HCT116 (cell line): ENCODE measurements at regions of chr10 and their contacts with region 1.

Region 1: GRCh38 chr10:60816628-60817397 is 38.5 kb downstream of the CDK1 start:
- DNase-seq: peak; percentile 64
- ATAC-seq: peak; percentile 92
- H3K4me3 ChIP-seq: no peak overlapping the region
- H3K27ac ChIP-seq: no peak overlapping the region
- H3K4me1 ChIP-seq: no peaks in the 10 kb centered on the region
- H3K27me3 ChIP-seq: no peaks in the 10 kb centered on the region
- CTCF ChIP-seq: peak; percentile 57 to 87 (median 72); a peak in 5 of 6 replicates
- POLR2A ChIP-seq: no peak
- RAD21 ChIP-seq: peak; percentile 87

Region 2: DNA sequence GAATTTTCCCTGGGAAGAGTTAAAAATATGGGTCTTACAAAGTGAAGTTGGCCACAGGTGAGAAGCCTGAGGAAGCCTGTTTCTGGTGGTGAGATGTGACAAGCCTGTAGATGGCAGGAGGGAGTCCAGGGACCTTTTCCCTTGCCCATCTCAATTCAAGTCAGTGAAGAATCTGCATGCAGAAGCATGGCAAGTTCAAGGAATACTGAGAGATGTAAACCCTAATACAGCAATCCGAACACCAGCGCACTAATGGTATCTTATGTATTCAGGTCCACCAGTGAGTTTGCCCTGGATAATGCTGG is 53.6 kb after region 1 on chr10:
- CTCF ChIA-PET with region 1: no interaction called
- POLR2A ChIA-PET with region 1: no interaction called
- RAD21 ChIA-PET with region 1: no interaction called
- intact Hi-C with region 1: no loop called
- DNase-seq: no peak
- ATAC-seq: peak; percentile 65; the same call in 1 of the 2 replicates
- H3K4me3 ChIP-seq: no peak overlapping the region
- H3K27ac ChIP-seq: no peak overlapping the region
- H3K4me1 ChIP-seq: no peaks in the 10 kb centered on the region
- H3K27me3 ChIP-seq: no peaks in the 10 kb centered on the region
- CTCF ChIP-seq: peak in 1 of 3 experiments; percentile 31; a peak in 1 of 6 replicates
- POLR2A ChIP-seq: no peak
- RAD21 ChIP-seq: no peak

Region 3: DNA sequence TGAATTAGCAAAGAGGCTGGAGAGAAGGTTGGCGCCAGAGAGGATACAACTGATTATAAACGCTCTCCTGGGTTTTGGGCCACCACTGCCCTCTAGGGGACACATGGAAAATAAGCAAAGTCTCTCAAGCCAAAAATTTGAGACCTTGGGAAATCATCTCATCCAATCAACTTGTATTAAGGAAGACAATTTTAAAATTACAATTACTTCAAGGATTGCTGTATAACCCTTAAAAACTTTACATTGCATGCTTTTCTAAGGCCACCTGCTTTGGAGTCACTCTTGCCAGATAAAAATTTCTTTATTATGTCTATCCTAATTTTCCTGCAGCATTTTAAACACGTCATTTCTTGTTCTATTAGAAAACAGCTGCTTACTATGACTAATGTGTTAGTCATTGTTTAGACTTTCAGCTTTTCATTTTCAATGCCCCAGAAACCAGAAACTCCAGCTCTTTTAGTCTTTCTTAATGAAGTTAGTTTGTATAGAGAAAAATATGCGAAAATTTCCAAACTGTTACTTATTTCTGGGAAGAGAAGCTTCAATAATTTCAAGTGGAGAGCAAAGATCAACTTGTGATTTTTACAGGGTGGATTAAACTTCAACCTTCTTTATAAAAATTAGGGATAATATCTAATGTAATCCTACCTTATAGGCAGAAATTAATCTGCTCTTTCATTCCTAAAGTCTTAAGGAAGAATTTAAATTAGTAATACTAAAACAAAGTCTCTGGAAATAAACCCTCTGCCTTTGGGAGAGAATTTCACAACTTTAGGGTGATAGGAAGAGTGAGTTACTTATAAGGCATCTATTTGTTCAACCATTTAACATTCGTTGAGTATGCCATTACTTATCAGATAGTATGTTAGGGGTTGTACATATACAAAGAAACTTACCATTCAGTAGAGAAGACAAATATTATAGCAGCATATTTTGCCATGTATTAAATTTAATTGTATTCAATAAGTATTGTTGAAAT is 147.7 kb after region 1 on chr10:
- CTCF ChIA-PET with region 1: interaction called, 12 read pairs
- POLR2A ChIA-PET with region 1: no interaction called
- RAD21 ChIA-PET with region 1: no interaction called
- intact Hi-C with region 1: loop called (anchors 2 kb)
- DNase-seq: peak; percentile 73
- ATAC-seq: peak; percentile 87
- H3K4me3 ChIP-seq: peak overlapping the region in 1 of 2 experiments; percentile 5; a peak in 1 of 4 replicates
- H3K27ac ChIP-seq: no peak overlapping the region
- H3K4me1 ChIP-seq: peaks cover 0 to 24% of the 10 kb centered on the region in 2 experiments; a peak in 3 of 4 replicates
- H3K27me3 ChIP-seq: no peaks in the 10 kb centered on the region
- CTCF ChIP-seq: peak; percentile 76 to 84 (median 77); a peak in 5 of 6 replicates
- POLR2A ChIP-seq: no peak
- RAD21 ChIP-seq: peak; percentile 76

Region 4: GRCh38 chr10:61189912-61190311 is 373.1 kb after region 1 on chr10:
- CTCF ChIA-PET with region 1: interaction called, 8 read pairs
- POLR2A ChIA-PET with region 1: no interaction called
- RAD21 ChIA-PET with region 1: interaction called in 1 of 2 experiments, 4 read pairs
- intact Hi-C with region 1: loop called (anchors 1 kb)
- DNase-seq: no peak
- ATAC-seq: no peak
- H3K4me3 ChIP-seq: no peak overlapping the region
- H3K27ac ChIP-seq: no peak overlapping the region
- H3K4me1 ChIP-seq: no peaks in the 10 kb centered on the region
- H3K27me3 ChIP-seq: no peaks in the 10 kb centered on the region
- CTCF ChIP-seq: no peak
- POLR2A ChIP-seq: no peak
- RAD21 ChIP-seq: no peak

Region 5: GRCh38 chr10:61284222-61284890 is 467.5 kb after region 1 on chr10:
- CTCF ChIA-PET with region 1: interaction called, 5 read pairs
- POLR2A ChIA-PET with region 1: no interaction called
- RAD21 ChIA-PET with region 1: no interaction called
- intact Hi-C with region 1: loop called (anchors 1 kb)
- DNase-seq: peak; percentile 34
- ATAC-seq: peak; percentile 60
- H3K4me3 ChIP-seq: no peak overlapping the region
- H3K27ac ChIP-seq: no peak overlapping the region
- H3K4me1 ChIP-seq: peaks cover 0 to 7% of the 10 kb centered on the region in 2 experiments; a peak in 2 of 4 replicates
- H3K27me3 ChIP-seq: no peaks in the 10 kb centered on the region
- CTCF ChIP-seq: peak; percentile 57 to 66 (median 65); a peak in 5 of 6 replicates
- POLR2A ChIP-seq: no peak
- RAD21 ChIP-seq: peak; percentile 70

Region 6: DNA sequence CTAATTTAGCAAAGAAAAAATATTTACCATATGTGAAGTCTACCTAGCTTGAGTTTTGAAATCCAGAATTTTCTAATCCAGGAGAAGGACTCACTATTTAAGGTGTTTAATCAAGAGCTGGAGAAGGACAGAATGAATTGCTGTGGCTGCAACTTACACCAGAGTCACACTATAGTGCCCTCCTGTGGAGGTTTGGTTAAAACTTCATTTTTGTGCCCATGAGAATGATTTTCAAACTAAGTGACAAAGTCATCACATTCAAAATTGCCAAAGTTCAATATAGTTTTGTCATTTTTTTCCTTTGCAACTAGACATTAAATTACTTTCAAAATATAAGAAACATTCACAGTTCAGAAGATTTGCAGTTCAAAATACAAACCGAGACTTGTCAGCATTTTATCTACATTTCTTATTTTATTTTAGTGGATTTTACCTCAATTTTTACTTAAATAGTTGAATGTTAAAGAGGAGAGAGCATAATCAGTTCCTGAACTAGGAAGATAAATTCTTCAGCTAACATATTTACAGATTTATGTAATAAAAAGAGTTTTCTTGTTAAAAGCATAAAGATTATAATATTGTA is 916.6 kb after region 1 on chr10:
- CTCF ChIA-PET with region 1: interaction called, 6 read pairs
- POLR2A ChIA-PET with region 1: no interaction called
- RAD21 ChIA-PET with region 1: no interaction called
- intact Hi-C with region 1: loop called (anchors 1 kb)
- DNase-seq: peak; percentile 47
- ATAC-seq: peak; percentile 60; the same call in 1 of the 2 replicates
- H3K4me3 ChIP-seq: no peak overlapping the region
- H3K27ac ChIP-seq: no peak overlapping the region
- H3K4me1 ChIP-seq: no peaks in the 10 kb centered on the region
- H3K27me3 ChIP-seq: no peaks in the 10 kb centered on the region
- CTCF ChIP-seq: peak; percentile 52 to 71 (median 53); a peak in 5 of 6 replicates
- POLR2A ChIP-seq: no peak
- RAD21 ChIP-seq: peak; percentile 74

Region 7: DNA sequence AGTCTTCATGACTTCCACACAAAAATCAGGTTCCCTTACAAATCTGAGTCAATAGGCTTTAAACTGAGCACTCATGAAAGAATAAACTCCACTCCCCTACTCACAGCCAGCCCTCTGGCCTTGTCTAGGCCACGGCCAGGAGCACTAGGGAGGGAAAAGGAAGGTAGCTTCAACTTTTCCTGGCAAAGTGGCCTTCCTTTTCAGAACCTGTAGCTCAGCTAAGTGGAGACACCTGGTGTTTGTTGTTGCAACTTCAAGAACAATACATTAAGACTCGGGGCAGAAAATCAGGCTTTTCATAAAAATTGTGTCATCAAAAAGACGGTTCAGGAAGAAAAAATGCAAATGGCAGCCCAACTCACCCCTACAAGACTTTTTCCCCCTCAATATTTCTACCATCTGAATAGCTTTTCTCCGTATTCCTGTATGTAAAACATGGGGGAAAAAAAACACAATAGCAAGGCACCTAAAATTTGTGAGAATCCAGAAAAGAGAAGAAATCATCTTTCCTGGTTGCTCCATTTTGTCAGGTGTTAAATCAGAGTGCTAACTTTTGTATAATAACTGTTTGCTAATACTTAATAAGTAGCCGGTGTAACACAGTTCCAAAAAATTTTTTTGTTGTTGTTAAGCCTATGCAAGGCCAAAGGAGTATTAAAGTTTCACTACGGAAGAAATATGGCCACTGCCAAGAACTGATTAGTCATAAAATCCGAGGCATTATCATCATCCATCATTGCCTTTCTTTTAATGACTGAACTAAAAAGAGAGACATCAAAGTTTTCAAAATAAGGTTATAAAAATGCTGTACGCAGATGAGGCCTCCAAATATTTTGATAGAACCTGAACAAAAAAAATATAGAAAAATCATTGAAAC is 1018.5 kb after region 1 on chr10:
- CTCF ChIA-PET with region 1: interaction called, 3 read pairs
- POLR2A ChIA-PET with region 1: no interaction called
- RAD21 ChIA-PET with region 1: no interaction called
- intact Hi-C with region 1: loop called (anchors 2 kb)
- DNase-seq: peak; percentile 71
- ATAC-seq: peak; percentile 62
- H3K4me3 ChIP-seq: peak overlapping the region in 1 of 2 experiments; percentile 41; a peak in 1 of 4 replicates
- H3K27ac ChIP-seq: peak overlapping the region; percentile 85; the same call in 1 of the 2 replicates
- H3K4me1 ChIP-seq: peaks cover 32 to 50% of the 10 kb centered on the region in 2 experiments
- H3K27me3 ChIP-seq: no peaks in the 10 kb centered on the region
- CTCF ChIP-seq: peak; percentile 62 to 63 (median 62); a peak in 5 of 6 replicates
- POLR2A ChIP-seq: no peak
- RAD21 ChIP-seq: peak; percentile 80

Region 8: DNA sequence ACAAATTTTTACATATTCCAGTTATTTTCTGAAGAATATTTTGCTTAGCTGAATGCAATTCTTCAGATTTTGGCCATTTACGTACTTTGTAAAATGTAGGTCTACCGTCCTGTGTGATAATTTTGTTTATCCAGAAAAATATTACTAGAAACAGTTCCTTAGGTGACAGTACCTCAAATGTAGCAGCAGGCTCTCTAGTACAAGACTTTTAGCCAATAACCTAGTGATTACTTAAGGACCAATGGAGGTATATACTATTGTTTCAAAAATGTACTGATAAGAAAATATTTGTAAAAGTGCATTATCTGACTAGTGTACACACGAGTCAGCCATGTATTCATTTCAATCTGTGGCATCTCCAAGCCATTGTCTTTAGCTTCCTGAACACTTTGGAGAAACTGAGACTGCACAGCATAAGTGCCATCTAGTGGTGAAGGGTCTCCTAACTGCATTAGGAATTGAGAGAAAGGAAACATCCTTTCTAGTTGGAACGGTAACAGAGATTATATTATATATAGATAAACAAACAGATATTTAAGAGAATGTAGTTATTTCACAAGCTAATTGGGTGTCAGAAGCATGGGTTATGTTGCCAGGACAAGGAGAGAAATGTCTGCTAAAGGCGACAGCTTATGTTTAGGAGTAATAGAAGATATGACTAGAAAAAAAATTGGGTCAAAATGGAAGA is 1428.1 kb after region 1 on chr10:
- CTCF ChIA-PET with region 1: no interaction called
- POLR2A ChIA-PET with region 1: no interaction called
- RAD21 ChIA-PET with region 1: no interaction called
- intact Hi-C with region 1: loop called (anchors 10 kb)
- DNase-seq: peak; percentile 53
- ATAC-seq: peak; percentile 84
- H3K4me3 ChIP-seq: no peak overlapping the region
- H3K27ac ChIP-seq: no peak overlapping the region
- H3K4me1 ChIP-seq: peaks cover 6 to 13% of the 10 kb centered on the region in 2 experiments
- H3K27me3 ChIP-seq: no peaks in the 10 kb centered on the region
- CTCF ChIP-seq: peak; percentile 83 to 91 (median 83)
- POLR2A ChIP-seq: no peak
- RAD21 ChIP-seq: peak; percentile 86